ENCODE measurements at regions of chr12 and their contacts with region 1.

Region 1: DNA sequence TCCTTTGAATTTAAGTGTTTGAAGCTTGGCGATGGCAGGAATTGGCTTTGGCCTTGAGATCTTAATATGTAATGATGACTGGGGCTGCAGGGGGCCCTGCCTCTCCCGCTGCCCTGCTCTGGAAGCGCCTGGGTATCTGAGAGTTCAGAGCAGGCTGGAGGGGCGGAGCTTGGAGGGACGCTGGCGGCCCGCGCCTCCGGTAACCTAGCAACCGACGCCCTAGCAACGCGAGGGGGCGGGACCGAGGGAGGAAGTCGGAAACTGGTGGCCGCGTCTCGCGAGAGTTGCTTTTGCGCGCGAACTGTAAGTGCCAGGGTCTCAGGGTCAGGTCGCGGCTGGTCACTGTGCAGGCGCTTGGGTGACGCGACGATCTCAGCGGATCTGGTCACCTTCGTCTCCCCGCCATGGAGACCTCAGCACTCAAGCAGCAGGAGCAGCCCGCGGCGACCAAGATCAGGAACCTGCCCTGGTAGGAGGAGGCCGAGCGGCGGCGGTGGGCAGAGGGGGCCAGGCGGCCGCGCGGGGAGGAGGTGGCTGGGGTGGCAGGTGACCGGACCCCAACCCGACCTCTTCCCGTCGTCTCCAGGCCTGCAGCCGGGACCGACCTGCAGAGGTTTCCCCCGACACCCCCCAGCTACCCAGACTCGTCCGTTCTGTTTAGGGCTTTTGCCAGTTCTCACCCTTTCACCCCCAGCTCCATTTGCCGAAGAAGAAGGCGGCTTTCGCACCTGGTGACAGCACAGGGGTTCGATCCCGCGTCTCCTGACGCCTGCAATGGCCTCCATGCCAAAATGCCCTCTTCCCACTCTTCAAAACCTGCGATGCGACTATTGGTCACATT is at the start of gene RFC5:
- DNase-seq: peak; percentile 94 to 97
- H3K4me3 ChIP-seq: peak within 1 kb of the TSS; percentile 84 to 97
- H3K27ac ChIP-seq: peak within 1 kb of the TSS; percentile 54
- H3K4me1 ChIP-seq: peaks cover 15% of the 10 kb centered on the region
- H3K27me3 ChIP-seq: no peaks in the 10 kb centered on the region
- CTCF ChIP-seq: no peak
- POLR2A ChIP-seq: no peak
- total RNA-seq, gene RFC5: 11.5 TPM

Region 2: GRCh38 chr12:117774941-117775775 is 241.5 kb before region 1 on chr12:
- intact Hi-C with region 1: no loop called
- DNase-seq: no peak
- H3K4me3 ChIP-seq: no peak overlapping the region
- H3K27ac ChIP-seq: no peak overlapping the region
- H3K4me1 ChIP-seq: no peaks in the 10 kb centered on the region
- H3K27me3 ChIP-seq: no peaks in the 10 kb centered on the region
- CTCF ChIP-seq: no peak
- POLR2A ChIP-seq: no peak

Region 3: DNA sequence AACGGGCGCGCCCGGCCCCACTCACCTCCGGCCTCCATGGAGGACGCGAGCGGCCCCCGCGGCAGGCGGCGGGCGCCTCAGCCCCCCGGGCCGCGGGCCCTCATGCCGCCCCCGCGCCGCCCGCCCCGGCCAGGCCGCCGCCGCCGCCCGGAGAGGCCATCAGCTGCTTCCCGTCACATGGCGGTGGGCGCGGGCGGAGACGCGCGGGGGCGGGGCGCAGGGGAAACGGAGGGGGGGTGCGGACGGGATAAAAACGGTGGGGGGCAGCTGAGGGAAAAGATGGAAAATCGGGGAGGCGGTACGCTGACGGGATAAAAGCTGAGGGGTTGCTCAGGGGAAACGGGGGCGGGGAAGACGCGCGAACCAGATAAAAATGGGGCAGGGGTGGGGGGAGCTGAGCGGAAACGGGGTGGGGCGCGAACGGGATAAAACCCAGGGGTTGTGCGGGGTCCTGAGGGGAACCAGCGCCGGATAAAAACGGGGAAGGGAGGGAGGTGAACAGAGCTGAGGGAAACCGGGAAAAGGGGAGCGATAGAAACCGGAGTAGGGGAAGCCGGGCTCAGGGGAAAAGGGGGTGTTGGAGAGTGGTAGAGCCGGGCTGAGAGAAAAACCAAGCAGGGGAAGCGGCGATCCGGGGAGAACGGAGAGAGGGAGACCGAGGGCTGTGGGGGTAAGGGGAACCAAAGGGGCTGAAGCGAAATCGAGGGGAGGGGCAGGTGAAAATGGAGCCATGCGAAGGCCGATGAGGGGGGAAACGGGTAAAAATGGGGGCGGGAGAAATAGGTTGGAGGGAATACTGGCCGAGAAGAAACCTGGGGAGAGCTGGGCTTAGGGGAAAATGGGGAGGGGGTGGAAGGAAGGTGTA is 44.6 kb after region 1 on chr12 and contains the start of gene WSB2:
- intact Hi-C with region 1: loop called (anchors 5 kb)
- DNase-seq: no peak
- H3K4me3 ChIP-seq: peak within 1 kb of the TSS; percentile 79 to 93
- H3K27ac ChIP-seq: peak within 1 kb of the TSS; percentile 99
- H3K4me1 ChIP-seq: peaks cover 45% of the 10 kb centered on the region
- H3K27me3 ChIP-seq: no peaks in the 10 kb centered on the region
- CTCF ChIP-seq: no peak
- POLR2A ChIP-seq: peak in 1 of 2 donors; percentile 20
- total RNA-seq, gene WSB2: 44.0 TPM

Measured in vagina (tissue), 2 donors.